CD4-positive, alpha-beta memory T cell (primary cell): ENCODE measurements at regions of chr20 and their contacts with region 1.

Region 1: DNA sequence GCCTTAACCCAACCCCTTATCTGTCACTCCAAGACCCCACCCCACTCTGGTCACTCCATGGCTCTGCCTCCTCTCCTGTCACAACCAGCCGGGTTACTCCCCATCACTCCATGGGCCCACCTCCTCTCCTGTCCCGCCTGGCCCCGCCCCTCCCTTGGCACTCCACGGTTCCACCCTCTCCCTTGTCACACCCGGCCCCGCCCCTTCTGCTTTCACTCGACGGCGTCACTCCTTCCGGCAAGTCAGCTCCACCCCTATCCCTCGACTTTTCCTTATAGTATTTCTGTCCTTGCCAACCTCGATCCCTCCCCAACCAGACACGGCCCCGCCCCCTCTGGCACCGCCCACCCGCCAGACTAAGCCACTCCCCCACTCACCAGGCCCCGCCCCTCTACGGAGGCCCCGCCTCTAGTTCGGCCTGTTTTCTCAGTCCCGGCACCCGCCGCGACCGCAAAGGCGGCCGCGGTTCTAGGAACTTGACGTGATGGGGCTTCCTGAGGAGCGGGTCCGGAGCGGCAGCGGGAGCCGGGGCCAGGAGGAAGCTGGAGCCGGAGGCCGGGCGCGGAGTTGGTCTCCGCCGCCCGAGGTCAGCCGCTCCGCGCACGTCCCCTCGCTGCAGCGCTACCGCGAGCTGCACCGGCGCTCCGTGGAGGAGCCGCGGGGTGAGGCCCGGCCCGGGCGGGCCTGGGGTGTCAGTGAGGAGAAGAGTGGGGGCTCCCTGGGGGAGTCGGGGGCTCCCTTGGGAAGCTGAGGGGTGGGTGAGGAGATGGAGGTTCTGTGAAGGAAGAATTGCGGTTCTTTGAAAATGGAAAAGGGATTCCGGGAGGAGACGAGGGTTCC is at the start of gene ACSS2:
- DNase-seq: peak; percentile 87 to 93 (median 89)
- H3K4me3 ChIP-seq: peak within 1 kb of the TSS; percentile 58 to 67
- H3K4me3 Mint-ChIP-seq: peak within 1 kb of the TSS; percentile 80 to 91 (median 89)
- H3K27ac ChIP-seq: peak within 1 kb of the TSS; percentile 37
- H3K27ac Mint-ChIP-seq: peak within 1 kb of the TSS; percentile 65 to 96 (median 92)
- H3K4me1 ChIP-seq: peaks cover 48% of the 10 kb centered on the region
- H3K4me1 Mint-ChIP-seq: peaks cover 36 to 66% (median 50%) of the 10 kb centered on the region in 4 donors
- H3K27me3 ChIP-seq: no peaks in the 10 kb centered on the region
- H3K27me3 Mint-ChIP-seq: no peaks in the 10 kb centered on the region
- total RNA-seq, gene ACSS2: 19.8 to 24.3 TPM

Region 2: GRCh38 chr20:33992923-33993575 is 883.3 kb before region 1 on chr20:
- CTCF ChIA-PET with region 1: no interaction called
- POLR2A ChIA-PET with region 1: no interaction called
- intact Hi-C with region 1: no loop called
- DNase-seq: peak; percentile 99 to 100 (median 100)
- H3K4me3 ChIP-seq: peak overlapping the region; percentile 77 to 89
- H3K4me3 Mint-ChIP-seq: peak overlapping the region; percentile 96 to 99 (median 98)
- H3K27ac ChIP-seq: peak overlapping the region; percentile 94
- H3K27ac Mint-ChIP-seq: peak overlapping the region; percentile 99 to 100 (median 99)
- H3K4me1 ChIP-seq: peaks cover 58% of the 10 kb centered on the region
- H3K4me1 Mint-ChIP-seq: peaks cover 41 to 72% (median 53%) of the 10 kb centered on the region in 4 donors
- H3K27me3 ChIP-seq: no peaks in the 10 kb centered on the region
- H3K27me3 Mint-ChIP-seq: peaks cover 0 to 2% of the 10 kb centered on the region in 2 donors

Region 3: GRCh38 chr20:34302723-34303528 is 573.5 kb before region 1 on chr20 and contains the start of gene AHCY:
- CTCF ChIA-PET with region 1: no interaction called
- POLR2A ChIA-PET with region 1: no interaction called
- intact Hi-C with region 1: loop called (anchors 2 kb)
- DNase-seq: peak; percentile 90 to 95 (median 93)
- H3K4me3 ChIP-seq: peak within 1 kb of the TSS; percentile 86 to 94
- H3K4me3 Mint-ChIP-seq: peak within 1 kb of the TSS; percentile 90 to 98 (median 95)
- H3K27ac ChIP-seq: peak within 1 kb of the TSS; percentile 81
- H3K27ac Mint-ChIP-seq: peak within 1 kb of the TSS; percentile 87 to 98 (median 97)
- H3K4me1 ChIP-seq: peaks cover 11% of the 10 kb centered on the region
- H3K4me1 Mint-ChIP-seq: peaks cover 9 to 26% (median 10%) of the 10 kb centered on the region in 4 donors
- H3K27me3 ChIP-seq: no peaks in the 10 kb centered on the region
- H3K27me3 Mint-ChIP-seq: no peaks in the 10 kb centered on the region
- total RNA-seq, gene AHCY: 23.1 to 24.2 TPM

Region 4: GRCh38 chr20:34773726-34774125 is 102.7 kb before region 1 on chr20:
- CTCF ChIA-PET with region 1: no interaction called
- POLR2A ChIA-PET with region 1: no interaction called
- intact Hi-C with region 1: no loop called
- DNase-seq: no peak
- H3K4me3 ChIP-seq: no peak overlapping the region
- H3K4me3 Mint-ChIP-seq: no peak overlapping the region
- H3K27ac ChIP-seq: no peak overlapping the region
- H3K27ac Mint-ChIP-seq: peak overlapping the region in 1 of 7 donors; percentile 61
- H3K4me1 ChIP-seq: no peaks in the 10 kb centered on the region
- H3K4me1 Mint-ChIP-seq: peaks cover 0 to 3% (median 0%) of the 10 kb centered on the region in 4 donors
- H3K27me3 ChIP-seq: no peaks in the 10 kb centered on the region
- H3K27me3 Mint-ChIP-seq: no peaks in the 10 kb centered on the region

Region 5: GRCh38 chr20:34825530-34826362 is 50.6 kb before region 1 on chr20 and contains the start of gene NCOA6:
- CTCF ChIA-PET with region 1: interaction called, 11 read pairs
- POLR2A ChIA-PET with region 1: interaction called, 11 read pairs
- intact Hi-C with region 1: loop called (anchors 2 kb)
- DNase-seq: peak; percentile 73 to 79 (median 74)
- H3K4me3 ChIP-seq: peak within 1 kb of the TSS; percentile 80 to 91
- H3K4me3 Mint-ChIP-seq: peak within 1 kb of the TSS; percentile 93 to 98 (median 97)
- H3K27ac ChIP-seq: peak within 1 kb of the TSS; percentile 78
- H3K27ac Mint-ChIP-seq: peak within 1 kb of the TSS; percentile 93 to 99 (median 95)
- H3K4me1 ChIP-seq: peaks cover 34% of the 10 kb centered on the region
- H3K4me1 Mint-ChIP-seq: peaks cover 23 to 48% (median 39%) of the 10 kb centered on the region in 4 donors
- H3K27me3 ChIP-seq: no peaks in the 10 kb centered on the region
- H3K27me3 Mint-ChIP-seq: peaks cover 0 to 1% of the 10 kb centered on the region in 2 donors
- total RNA-seq, gene NCOA6: 29.5 to 29.9 TPM

Region 6: DNA sequence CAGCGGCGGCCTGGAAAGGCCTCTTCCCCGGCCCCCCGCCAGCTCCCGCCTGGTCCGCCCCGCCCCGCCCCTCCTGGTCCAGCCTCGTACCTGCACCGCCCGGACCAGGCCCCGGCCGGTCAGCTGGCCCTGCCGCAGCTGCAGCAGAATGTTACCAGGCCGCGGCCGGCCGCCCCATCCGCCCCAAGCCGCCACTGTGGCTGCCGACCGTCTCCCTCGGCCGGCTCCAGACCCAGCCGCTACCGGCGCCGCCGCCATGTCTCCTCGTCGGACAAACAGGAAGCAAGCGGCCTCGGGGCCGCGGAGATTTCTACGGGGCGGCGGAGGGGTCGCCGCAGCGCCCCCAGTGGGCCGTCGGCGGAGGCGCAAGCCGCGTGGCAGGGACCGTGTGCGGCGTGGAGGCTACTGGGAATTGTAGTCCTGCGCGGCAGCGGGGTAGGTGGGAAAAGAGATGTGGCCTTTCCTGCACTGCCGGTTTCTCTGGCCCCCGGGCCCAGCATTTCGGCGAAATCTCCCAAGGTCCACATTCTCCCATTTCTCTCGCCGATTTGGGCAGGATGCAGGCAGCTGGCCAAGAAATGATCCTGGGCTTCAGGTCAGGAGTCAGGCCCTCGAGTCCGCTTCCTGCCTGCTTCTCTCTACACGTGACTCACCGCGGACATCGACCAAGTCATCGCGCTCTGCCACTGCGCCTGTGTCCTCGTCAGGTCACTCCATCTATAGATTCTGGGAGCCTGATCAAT is 216.3 kb after region 1 on chr20 and contains the start of gene TRPC4AP:
- CTCF ChIA-PET with region 1: interaction called, 9 read pairs
- POLR2A ChIA-PET with region 1: interaction called, 6 read pairs
- intact Hi-C with region 1: loop called (anchors 1 kb)
- DNase-seq: peak; percentile 85 to 90 (median 88)
- H3K4me3 ChIP-seq: peak within 1 kb of the TSS; percentile 66 to 88
- H3K4me3 Mint-ChIP-seq: peak within 1 kb of the TSS; percentile 90 to 96 (median 92)
- H3K27ac ChIP-seq: peak within 1 kb of the TSS; percentile 67
- H3K27ac Mint-ChIP-seq: peak within 1 kb of the TSS; percentile 77 to 98 (median 94)
- H3K4me1 ChIP-seq: peaks cover 39% of the 10 kb centered on the region
- H3K4me1 Mint-ChIP-seq: peaks cover 26 to 59% (median 43%) of the 10 kb centered on the region in 4 donors
- H3K27me3 ChIP-seq: no peaks in the 10 kb centered on the region
- H3K27me3 Mint-ChIP-seq: no peaks in the 10 kb centered on the region
- total RNA-seq, gene TRPC4AP: 61.2 to 63.0 TPM

Region 7: GRCh38 chr20:35277531-35278395 is 401.4 kb after region 1 on chr20 and contains the start of gene MMP24OS:
- CTCF ChIA-PET with region 1: no interaction called
- POLR2A ChIA-PET with region 1: interaction called, 4 read pairs
- intact Hi-C with region 1: loop called (anchors 1 kb)
- DNase-seq: peak; percentile 87 to 92 (median 90)
- H3K4me3 ChIP-seq: peak within 1 kb of the TSS; percentile 59 to 94
- H3K4me3 Mint-ChIP-seq: peak within 1 kb of the TSS; percentile 95 to 98 (median 96)
- H3K27ac ChIP-seq: peak within 1 kb of the TSS; percentile 95
- H3K27ac Mint-ChIP-seq: peak within 1 kb of the TSS; percentile 97 to 100 (median 99)
- H3K4me1 ChIP-seq: peaks cover 14% of the 10 kb centered on the region
- H3K4me1 Mint-ChIP-seq: peaks cover 3 to 41% (median 19%) of the 10 kb centered on the region in 4 donors
- H3K27me3 ChIP-seq: no peaks in the 10 kb centered on the region
- H3K27me3 Mint-ChIP-seq: no peaks in the 10 kb centered on the region
- total RNA-seq, gene MMP24OS: 76.6 to 91.6 TPM